RWPE1 (cell line): ENCODE measurements at regions of chr20 and their contacts with region 1.

Region 1: DNA sequence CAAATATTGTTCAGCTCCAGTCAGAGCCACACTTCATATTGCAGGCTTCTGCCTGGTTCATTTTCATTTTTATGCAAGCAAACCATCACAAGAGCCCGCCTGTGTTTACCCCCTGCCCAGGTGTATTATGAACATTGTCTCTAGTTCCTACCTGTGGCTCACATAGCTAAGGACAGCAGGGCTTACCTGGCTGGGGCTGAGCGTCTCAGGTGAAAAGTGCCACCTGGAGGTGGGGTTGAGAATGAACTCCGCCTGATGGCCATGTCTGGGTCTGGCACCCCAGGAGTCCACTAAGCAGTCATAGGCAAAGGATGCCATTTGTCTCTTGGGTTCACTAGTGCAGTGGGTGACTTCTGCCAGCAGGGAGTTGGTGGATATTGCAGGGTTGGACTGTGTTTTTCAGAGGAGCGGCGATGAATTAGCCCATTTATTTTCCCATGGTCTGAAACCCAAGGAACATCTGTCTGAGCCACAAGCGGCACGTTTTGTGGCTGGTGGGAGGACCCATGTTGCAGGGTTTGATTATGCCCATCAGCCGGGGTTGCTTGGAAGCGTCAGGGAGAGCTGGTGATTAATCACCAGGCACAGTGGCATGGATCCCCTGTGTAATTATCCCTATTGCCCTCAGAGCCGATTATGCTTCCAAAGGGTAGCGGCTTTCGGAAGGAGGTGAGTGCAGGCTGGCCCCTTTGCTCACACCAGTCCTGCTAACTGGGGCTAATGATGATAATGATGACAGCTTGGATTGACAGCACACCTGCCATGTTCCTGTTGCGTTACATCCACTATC is 92.1 kb downstream of the CDH26 start:
- DNase-seq: peak; percentile 80
- H3K27ac ChIP-seq: no peak overlapping the region
- CTCF ChIP-seq: no peak; the same call in 1 of the 2 replicates

Region 2: GRCh38 chr20:59948828-59949720 is 101.3 kb before region 1 on chr20:
- CTCF ChIA-PET with region 1: interaction called, 19 read pairs
- POLR2A ChIA-PET with region 1: no interaction called
- DNase-seq: peak; percentile 48
- H3K27ac ChIP-seq: no peak overlapping the region
- CTCF ChIP-seq: peak; percentile 94

Region 3: GRCh38 chr20:59955132-59955796 is 95.1 kb before region 1 on chr20:
- CTCF ChIA-PET with region 1: interaction called, 19 read pairs
- POLR2A ChIA-PET with region 1: no interaction called
- DNase-seq: peak; percentile 39
- H3K27ac ChIP-seq: no peak overlapping the region
- CTCF ChIP-seq: peak; percentile 26; the same call in 1 of the 2 replicates

Region 4: GRCh38 chr20:60108397-60108796 is 58.0 kb after region 1 on chr20:
- CTCF ChIA-PET with region 1: interaction called, 10 read pairs
- POLR2A ChIA-PET with region 1: no interaction called
- DNase-seq: no peak
- H3K27ac ChIP-seq: no peak overlapping the region
- CTCF ChIP-seq: no peak